ENCODE measurements at regions of chr1 and their contacts with region 1.

Region 1: DNA sequence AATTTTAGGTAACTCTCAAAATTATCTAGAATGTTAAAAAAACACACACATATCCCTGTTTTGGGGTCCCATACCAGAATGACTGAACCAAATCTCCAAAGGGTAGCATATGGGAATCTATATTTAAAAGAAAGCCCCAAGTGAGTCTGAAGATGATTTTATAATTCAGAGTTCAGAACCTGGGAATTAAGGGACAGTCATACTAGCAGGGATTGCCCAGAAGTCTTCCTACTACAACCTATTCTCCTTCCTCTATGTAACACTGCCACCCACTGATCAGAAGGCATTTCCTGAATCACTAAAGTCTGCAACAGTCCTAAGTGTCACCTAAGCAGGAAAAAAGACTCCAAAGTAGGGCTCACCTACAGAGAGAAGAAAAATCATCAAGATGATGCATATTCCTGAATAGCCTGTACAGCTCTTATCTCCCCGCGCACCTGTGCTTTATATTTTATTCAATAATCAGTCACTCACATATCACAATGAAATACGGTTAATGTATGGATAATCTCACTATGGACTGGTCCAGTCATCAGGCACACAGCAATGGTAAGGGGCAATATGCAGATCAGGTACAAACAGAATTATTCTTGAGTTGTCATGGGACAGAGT is 4.9 kb downstream of the RGS1 start:
- DNase-seq: no peak
- ATAC-seq: peak; percentile 38
- H3K4me3 Mint-ChIP-seq: peak overlapping the region; percentile 76
- H3K27ac Mint-ChIP-seq: no peak overlapping the region
- H3K4me1 Mint-ChIP-seq: peaks cover 50% of the 10 kb centered on the region
- H3K27me3 Mint-ChIP-seq: no peaks in the 10 kb centered on the region

Region 2: DNA sequence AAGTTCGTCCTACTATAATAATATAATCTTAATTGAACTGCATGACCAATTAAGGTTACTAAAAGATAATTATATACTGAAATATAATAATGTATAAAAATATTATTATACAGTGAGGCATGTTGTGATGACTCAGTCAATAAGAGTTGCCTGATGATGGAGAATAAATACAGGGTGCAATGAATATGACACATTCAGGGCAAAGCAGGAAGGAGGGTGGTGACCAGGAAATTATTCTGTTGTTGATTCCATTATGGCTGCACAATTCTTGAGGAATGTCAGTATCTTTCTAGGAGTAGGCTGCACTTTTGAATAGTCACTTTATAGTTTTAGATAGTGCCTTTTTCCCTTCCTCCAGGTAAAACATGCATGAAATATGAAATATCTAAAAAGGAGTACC is 310.1 kb before region 1 on chr1:
- CTCF ChIA-PET with region 1: no interaction called
- POLR2A ChIA-PET with region 1: no interaction called
- intact Hi-C with region 1: no loop called
- DNase-seq: no peak
- ATAC-seq: no peak
- H3K4me3 Mint-ChIP-seq: no peak overlapping the region
- H3K27ac Mint-ChIP-seq: no peak overlapping the region
- H3K4me1 Mint-ChIP-seq: no peaks in the 10 kb centered on the region
- H3K27me3 Mint-ChIP-seq: no peaks in the 10 kb centered on the region

Region 3: DNA sequence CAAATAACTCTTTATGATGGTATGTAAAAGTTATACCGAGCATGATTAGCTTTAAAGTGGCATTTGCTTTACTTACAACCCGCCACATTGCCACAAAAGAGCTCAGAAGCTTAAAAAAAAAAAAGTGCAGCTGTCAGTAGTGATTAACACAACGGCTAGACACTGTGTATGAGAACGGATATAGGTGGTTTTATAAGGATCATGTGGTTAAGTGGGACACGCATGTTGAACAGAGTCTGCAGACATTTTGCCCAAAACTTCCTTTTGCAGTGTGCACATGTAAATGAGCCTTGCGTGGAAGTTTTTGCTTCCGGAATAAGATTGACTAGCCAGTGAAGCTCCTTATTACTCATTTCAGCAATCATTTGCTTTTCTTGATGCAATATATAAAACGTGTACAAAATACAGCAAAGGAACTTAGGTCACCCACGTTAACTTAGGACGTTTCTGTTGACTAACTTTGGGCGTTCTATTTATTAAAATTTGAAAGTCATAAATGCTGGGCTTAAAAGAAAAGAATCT is 63.6 kb before region 1 on chr1:
- CTCF ChIA-PET with region 1: no interaction called
- POLR2A ChIA-PET with region 1: interaction called, 3 read pairs
- intact Hi-C with region 1: loop called (anchors 1 kb)
- DNase-seq: peak; percentile 63
- ATAC-seq: peak; percentile 97
- H3K4me3 Mint-ChIP-seq: peak overlapping the region; percentile 40
- H3K27ac Mint-ChIP-seq: peak overlapping the region; percentile 63
- H3K4me1 Mint-ChIP-seq: peaks cover 62% of the 10 kb centered on the region
- H3K27me3 Mint-ChIP-seq: no peaks in the 10 kb centered on the region

Region 4: GRCh38 chr1:192545896-192546521 is 34.4 kb before region 1 on chr1:
- CTCF ChIA-PET with region 1: interaction called, 3 read pairs
- POLR2A ChIA-PET with region 1: interaction called, 4 read pairs
- intact Hi-C with region 1: loop called (anchors 1 kb)
- DNase-seq: no peak
- ATAC-seq: no peak
- H3K4me3 Mint-ChIP-seq: no peak overlapping the region
- H3K27ac Mint-ChIP-seq: no peak overlapping the region
- H3K4me1 Mint-ChIP-seq: peaks cover 49% of the 10 kb centered on the region
- H3K27me3 Mint-ChIP-seq: no peaks in the 10 kb centered on the region

Region 5: DNA sequence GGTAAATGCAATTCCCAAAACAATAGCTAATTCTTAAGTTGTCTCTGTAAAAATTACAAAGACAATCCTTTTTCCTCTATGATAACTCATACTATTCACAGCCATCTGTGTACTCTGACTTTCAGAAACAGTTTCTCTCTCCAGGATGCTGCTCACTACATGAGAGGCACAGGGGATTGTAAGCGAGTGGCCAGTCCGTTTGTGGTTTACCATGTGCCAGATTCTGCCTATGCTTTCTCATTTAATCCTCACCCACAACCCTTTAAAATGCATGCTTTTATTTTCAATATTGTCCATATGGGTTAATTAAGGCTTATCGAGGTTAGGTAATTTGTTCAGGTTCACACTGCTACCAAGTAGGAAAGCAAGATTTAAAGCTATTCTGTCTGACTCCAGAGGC is 18.1 kb after region 1 on chr1:
- CTCF ChIA-PET with region 1: interaction called, 4 read pairs
- POLR2A ChIA-PET with region 1: no interaction called
- intact Hi-C with region 1: loop called in 1 of 2 experiments (anchors 2 kb)
- DNase-seq: no peak
- ATAC-seq: no peak
- H3K4me3 Mint-ChIP-seq: no peak overlapping the region
- H3K27ac Mint-ChIP-seq: no peak overlapping the region
- H3K4me1 Mint-ChIP-seq: peaks cover 29% of the 10 kb centered on the region
- H3K27me3 Mint-ChIP-seq: no peaks in the 10 kb centered on the region

Region 6: GRCh38 chr1:193059268-193060225 is 479.1 kb after region 1 on chr1 and contains the starts of genes RO60 and UCHL5:
- CTCF ChIA-PET with region 1: interaction called, 3 read pairs
- POLR2A ChIA-PET with region 1: no interaction called
- intact Hi-C with region 1: loop called in 1 of 2 experiments (anchors 1 kb)
- DNase-seq: peak; percentile 97
- ATAC-seq: peak; percentile 94
- H3K4me3 Mint-ChIP-seq: peak within 1 kb of the TSS; percentile 90
- H3K27ac Mint-ChIP-seq: peak within 1 kb of the TSS; percentile 99
- H3K4me1 Mint-ChIP-seq: peaks cover 50% of the 10 kb centered on the region
- H3K27me3 Mint-ChIP-seq: no peaks in the 10 kb centered on the region
- total RNA-seq, gene RO60: 45.4 to 57.3 TPM
- total RNA-seq, gene UCHL5: 94.5 to 141 TPM